ENCODE measurements at regions of chr3 and their contacts with region 1.

Region 1: DNA sequence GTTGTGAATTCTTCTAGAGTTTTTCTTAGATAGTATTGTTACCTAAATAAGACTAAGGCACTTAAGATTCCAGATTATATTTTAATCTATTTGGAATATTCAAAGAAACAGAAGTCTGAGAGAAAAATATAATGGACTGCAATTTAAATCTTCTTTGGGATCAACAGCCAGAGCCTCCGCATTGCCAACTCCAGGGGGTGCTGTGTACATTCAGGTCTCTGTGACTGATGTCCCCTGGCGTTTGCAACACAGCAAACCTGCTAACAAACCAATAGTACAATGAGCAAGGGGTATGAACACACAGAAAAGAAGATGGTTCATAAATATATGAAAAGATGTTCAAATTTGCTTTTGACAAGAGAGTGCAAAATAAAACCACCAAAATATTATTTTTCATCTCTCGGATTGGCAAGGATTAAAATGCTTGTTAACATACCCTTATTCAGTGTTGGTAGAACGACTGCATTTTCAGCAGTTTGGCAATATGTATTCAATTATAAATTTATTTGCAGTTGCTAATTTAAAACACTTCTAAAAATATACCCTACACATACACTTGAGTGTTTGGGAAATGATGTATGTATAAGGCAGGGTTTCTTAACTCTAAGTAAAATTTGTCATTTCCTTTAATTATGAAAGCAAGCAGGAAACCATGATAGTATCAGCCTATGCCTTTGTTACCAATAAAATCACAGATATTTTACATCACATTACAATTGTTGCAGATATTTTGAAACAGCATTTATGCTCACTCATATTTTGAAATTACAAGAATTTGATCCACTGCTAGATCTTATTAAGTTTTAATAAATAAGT is 16.1 kb upstream of the TM4SF1 start:
- DNase-seq: peak; percentile 55 to 76
- ATAC-seq: peak in 7 of 8 donors; percentile 72 to 90 (median 86)
- H3K4me3 ChIP-seq: no peak overlapping the region
- H3K27ac ChIP-seq: peak overlapping the region in 5 of 10 donors; percentile 16 to 71 (median 28)
- H3K4me1 ChIP-seq: peaks cover 0 to 40% (median 21%) of the 10 kb centered on the region in 9 donors
- H3K27me3 ChIP-seq: no peaks in the 10 kb centered on the region
- CTCF ChIP-seq: peak; percentile 56 to 94 (median 83)

Region 2: DNA sequence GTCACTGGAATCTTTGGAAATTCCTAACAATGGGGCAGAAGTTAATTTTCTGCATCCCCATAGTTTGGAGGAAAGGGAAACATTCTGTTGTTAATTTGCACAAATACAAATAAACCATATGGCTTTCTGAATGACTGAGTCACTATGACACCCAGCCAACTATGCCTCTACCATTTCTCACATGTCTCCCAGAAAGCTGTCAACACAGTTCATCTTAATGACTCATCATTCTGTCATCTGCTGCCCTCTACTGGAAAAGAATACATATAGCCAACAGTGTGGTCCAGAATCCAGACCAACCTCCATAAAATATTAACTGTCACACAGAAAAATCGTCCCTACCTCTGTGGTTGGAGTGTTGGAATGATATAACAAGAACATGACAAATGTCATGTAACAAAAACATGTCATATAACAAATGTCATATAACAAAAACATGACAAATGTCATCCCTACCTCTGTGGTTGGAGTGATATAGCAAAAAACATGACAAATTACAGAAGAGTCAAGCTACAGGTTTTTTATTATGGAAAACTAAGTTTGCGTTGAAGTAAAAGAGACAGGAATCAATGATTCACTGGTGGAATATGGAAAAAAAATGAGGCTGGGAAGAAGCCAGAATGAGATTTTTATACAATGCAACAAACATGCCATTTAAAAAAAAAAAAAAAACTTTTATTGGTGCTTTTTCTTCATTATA is 449.9 kb before region 1 on chr3:
- intact Hi-C with region 1: no loop called
- DNase-seq: peak in 1 of 2 donors; percentile 29
- ATAC-seq: peak; percentile 74 to 93 (median 82)
- H3K4me3 ChIP-seq: no peak overlapping the region
- H3K27ac ChIP-seq: no peak overlapping the region
- H3K4me1 ChIP-seq: peaks cover 0 to 3% (median 0%) of the 10 kb centered on the region in 9 donors
- H3K27me3 ChIP-seq: no peaks in the 10 kb centered on the region
- CTCF ChIP-seq: peak; percentile 37 to 77 (median 72)

Region 3: GRCh38 chr3:149224736-149225594 is 168.6 kb before region 1 on chr3:
- intact Hi-C with region 1: no loop called
- DNase-seq: no peak
- ATAC-seq: peak; percentile 63 to 96 (median 88)
- H3K4me3 ChIP-seq: peak overlapping the region in 9 of 10 donors; percentile 8 to 53 (median 41)
- H3K27ac ChIP-seq: peak overlapping the region; percentile 52 to 88 (median 72)
- H3K4me1 ChIP-seq: peaks cover 0 to 22% (median 8%) of the 10 kb centered on the region in 9 donors
- H3K27me3 ChIP-seq: no peaks in the 10 kb centered on the region
- CTCF ChIP-seq: no peak

Region 4: GRCh38 chr3:149352556-149352955 is 41.0 kb before region 1 on chr3:
- intact Hi-C with region 1: loop called in 3 of 10 experiments (anchors 5 kb)
- DNase-seq: peak; percentile 48 to 57
- ATAC-seq: peak; percentile 65 to 86 (median 82)
- H3K4me3 ChIP-seq: no peak overlapping the region
- H3K27ac ChIP-seq: peak overlapping the region in 4 of 10 donors; percentile 13 to 42 (median 34)
- H3K4me1 ChIP-seq: peaks cover 0 to 21% (median 0%) of the 10 kb centered on the region in 9 donors
- H3K27me3 ChIP-seq: no peaks in the 10 kb centered on the region
- CTCF ChIP-seq: peak; percentile 32 to 81 (median 66)

Region 5: DNA sequence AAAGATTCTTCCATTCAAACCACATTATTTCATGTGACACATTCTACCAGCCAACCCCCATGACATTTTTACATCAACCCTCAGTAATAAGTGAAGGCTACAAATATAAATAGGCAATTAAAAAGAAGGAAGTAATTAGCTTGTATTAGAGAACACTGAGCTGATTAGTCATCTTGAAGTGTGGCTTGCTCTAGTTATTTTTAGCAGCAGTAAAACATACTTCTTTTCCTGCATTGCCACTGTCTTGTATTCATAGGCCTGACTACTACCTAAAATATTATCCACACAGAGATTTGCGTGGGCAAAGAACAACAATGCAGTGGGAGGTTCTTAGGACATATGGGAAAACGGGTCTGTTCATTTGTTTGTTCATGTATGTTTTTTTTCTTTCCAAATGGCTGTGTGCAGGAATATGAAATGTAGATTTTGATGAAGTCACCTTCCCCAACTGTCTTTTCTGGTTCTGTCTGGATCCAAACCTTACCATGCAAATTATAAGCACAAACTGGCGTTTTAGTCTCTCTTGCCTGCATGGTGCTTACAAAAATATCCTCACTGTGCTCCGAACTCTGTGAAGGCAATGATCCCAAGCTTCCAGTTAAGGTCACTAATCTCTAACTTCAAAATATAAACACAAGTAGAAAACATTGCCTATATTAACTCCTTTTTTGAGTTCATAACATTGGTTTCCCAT is 49.4 kb after region 1 on chr3:
- intact Hi-C with region 1: loop called in 1 of 10 experiments (anchors 1 kb)
- DNase-seq: no peak
- ATAC-seq: peak in 2 of 8 donors; percentile 30 to 71
- H3K4me3 ChIP-seq: no peak overlapping the region
- H3K27ac ChIP-seq: no peak overlapping the region
- H3K4me1 ChIP-seq: peaks cover 0 to 19% (median 4%) of the 10 kb centered on the region in 9 donors
- H3K27me3 ChIP-seq: no peaks in the 10 kb centered on the region
- CTCF ChIP-seq: no peak

Region 6: DNA sequence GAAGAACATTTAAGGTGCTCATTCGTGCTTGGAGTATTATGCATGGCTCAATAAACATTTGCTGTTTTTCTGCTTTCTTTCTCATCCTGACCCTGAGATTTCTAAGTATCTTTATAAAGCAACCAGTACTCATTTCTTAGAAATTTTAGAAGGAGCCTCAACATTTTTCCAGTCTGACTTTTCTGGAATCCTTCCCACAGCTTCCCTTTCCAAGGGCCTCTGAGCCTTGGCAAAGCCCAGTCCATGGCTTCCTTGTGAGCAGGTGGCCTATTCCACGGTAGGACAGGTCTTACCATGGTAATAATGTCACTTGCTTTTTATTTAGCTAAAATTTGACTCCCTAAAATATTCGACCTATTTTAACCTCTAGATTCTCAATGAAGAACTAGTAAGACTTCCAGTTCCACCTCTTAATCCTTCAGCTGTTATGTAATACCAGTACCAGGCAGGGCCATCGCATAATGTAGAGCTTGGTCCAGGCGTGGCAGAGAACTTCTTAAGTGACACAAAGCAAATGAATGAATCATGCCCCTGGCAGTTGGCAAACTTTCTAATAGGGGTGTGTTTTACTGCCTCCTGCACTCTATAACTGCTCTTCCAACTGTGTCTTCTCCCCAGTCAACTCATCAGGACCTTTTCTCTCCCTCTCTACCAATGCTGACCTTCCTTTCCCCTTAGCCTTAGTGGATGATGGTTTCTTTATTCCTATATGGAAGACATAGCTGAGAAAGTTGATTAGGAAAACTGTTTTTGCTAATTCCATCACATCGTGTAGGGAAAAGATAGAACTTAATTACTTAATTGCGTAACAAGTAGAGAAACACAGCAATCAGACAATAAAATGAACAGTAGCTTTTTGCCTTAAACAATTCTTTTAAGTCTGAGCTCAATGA is 80.0 kb after region 1 on chr3:
- intact Hi-C with region 1: loop called in 3 of 10 experiments (anchors 2 to 10 kb)
- DNase-seq: no peak
- ATAC-seq: peak in 6 of 8 donors; percentile 29 to 71 (median 44)
- H3K4me3 ChIP-seq: no peak overlapping the region
- H3K27ac ChIP-seq: no peak overlapping the region
- H3K4me1 ChIP-seq: peaks cover 0 to 42% (median 9%) of the 10 kb centered on the region in 9 donors
- H3K27me3 ChIP-seq: no peaks in the 10 kb centered on the region
- CTCF ChIP-seq: no peak

Region 7: GRCh38 chr3:149480325-149481017 is 86.9 kb after region 1 on chr3:
- intact Hi-C with region 1: loop called in 9 of 10 experiments (anchors 1 to 10 kb)
- DNase-seq: peak; percentile 74 to 88
- ATAC-seq: peak; percentile 92 to 97 (median 96)
- H3K4me3 ChIP-seq: no peak overlapping the region
- H3K27ac ChIP-seq: peak overlapping the region; percentile 12 to 89 (median 74)
- H3K4me1 ChIP-seq: peaks cover 0 to 20% (median 14%) of the 10 kb centered on the region in 9 donors
- H3K27me3 ChIP-seq: no peaks in the 10 kb centered on the region
- CTCF ChIP-seq: peak; percentile 71 to 97 (median 86)

Measured in heart right ventricle (tissue), 16 donors.